GM23248 (cell line): ENCODE measurements at regions of chr15 and their contacts with region 1.

Region 1: GRCh38 chr15:95259513-95259912 is 1028.2 kb downstream of the MCTP2 start:
- DNase-seq: peak; percentile 86
- H3K4me3 ChIP-seq: no peak overlapping the region
- H3K27ac ChIP-seq: no peak overlapping the region
- H3K4me1 ChIP-seq: peaks cover 35% of the 10 kb centered on the region
- H3K27me3 ChIP-seq: no peaks in the 10 kb centered on the region

Region 2: DNA sequence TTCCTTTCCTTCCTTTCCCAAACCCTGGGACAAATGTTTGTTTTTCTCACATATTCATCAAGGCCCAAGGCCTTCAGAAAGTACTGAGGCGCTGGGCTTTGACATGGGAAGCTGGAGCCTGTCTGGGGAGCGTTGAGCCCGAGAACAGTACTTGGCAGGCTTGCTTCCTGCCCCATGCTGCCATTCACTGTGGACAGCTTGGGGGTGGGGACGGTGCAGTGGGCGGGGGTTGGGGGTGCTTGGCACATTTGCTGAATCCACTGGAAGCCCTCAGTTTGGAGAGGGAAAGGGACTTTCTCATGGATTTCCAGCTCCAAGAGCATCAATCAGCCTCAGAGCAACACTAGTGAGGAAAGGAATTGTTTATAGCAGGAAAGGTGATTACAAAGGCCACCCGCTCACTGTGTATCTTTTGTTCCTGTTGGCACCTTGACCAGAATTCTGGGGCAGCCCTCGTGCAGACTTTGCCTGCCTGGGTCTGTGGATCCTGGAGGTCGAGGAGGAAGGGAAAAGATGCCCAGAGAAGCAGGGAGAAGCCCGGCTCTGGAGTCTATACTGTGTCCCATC is 1970.7 kb before region 1 on chr15:
- in situ Hi-C with region 1: no loop called
- DNase-seq: no peak
- H3K4me3 ChIP-seq: no peak overlapping the region
- H3K27ac ChIP-seq: no peak overlapping the region
- H3K4me1 ChIP-seq: no peaks in the 10 kb centered on the region
- H3K27me3 ChIP-seq: no peaks in the 10 kb centered on the region

Region 3: GRCh38 chr15:96345560-96346399 is 1086.3 kb after region 1 on chr15:
- in situ Hi-C with region 1: loop called (anchors 10 kb)
- DNase-seq: peak; percentile 88
- H3K4me3 ChIP-seq: peak overlapping the region; percentile 69
- H3K27ac ChIP-seq: peak overlapping the region; percentile 52
- H3K4me1 ChIP-seq: peaks cover 41% of the 10 kb centered on the region
- H3K27me3 ChIP-seq: no peaks in the 10 kb centered on the region

Region 4: DNA sequence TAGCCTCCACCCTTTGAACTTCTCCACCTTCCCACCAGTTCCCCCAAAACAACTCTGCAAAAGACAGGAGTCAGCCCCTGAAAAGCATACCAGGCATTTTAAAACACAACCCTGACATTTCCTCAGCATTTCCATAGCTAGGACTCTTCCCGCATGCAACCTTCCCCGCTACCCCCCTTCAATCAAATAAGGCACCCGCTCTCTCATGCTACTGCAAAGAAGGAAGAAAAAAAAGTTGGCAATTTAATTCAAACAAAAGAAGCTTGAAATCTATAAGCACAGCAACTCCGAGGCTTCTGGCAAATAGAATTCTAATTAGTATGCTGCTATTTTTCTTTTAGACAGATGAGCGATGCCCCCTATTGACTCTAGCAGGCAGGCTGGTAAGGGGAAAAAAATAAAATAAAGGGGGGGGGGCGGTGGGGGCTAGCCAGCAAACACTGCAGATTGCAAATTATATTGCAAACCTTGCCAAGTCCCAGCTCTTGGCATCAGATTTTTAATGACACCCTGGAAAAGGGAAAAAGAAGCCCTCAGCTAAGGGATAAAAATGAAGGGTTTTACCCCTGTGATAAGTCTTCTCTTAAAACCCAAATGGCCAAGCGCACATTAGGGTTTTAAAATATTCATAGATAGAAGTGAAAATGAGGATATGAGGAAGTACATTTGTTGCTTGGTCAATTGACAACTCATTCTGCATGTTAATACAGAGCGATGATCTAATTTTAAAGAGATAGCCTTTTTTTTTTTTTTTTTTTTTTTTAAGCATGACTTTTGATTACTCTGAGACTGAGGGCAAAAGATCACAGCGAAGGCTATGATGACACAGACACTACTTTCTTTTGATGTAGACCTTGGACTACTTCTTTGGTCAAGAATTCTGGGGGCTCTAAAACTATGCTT is 1326.2 kb after region 1 on chr15:
- in situ Hi-C with region 1: loop called (anchors 25 kb)
- DNase-seq: peak; percentile 48
- H3K4me3 ChIP-seq: no peak overlapping the region
- H3K27ac ChIP-seq: no peak overlapping the region
- H3K4me1 ChIP-seq: no peaks in the 10 kb centered on the region
- H3K27me3 ChIP-seq: peaks cover 32% of the 10 kb centered on the region

Region 5: GRCh38 chr15:97234851-97235610 is 1975.5 kb after region 1 on chr15:
- in situ Hi-C with region 1: loop called (anchors 25 kb)
- DNase-seq: peak; percentile 71
- H3K4me3 ChIP-seq: 0 out of 2 replicates have a peak overlapping the region, but pooled peaks have one; percentile 0
- H3K27ac ChIP-seq: no peak overlapping the region
- H3K4me1 ChIP-seq: no peaks in the 10 kb centered on the region
- H3K27me3 ChIP-seq: 0 out of 2 replicates have a peak, but pooled peaks cover 8% of the 10 kb centered on the region